Common myeloid progenitor, CD34-positive (primary cell): ENCODE measurements at regions of chr12 and their contacts with region 1.

Region 1: DNA sequence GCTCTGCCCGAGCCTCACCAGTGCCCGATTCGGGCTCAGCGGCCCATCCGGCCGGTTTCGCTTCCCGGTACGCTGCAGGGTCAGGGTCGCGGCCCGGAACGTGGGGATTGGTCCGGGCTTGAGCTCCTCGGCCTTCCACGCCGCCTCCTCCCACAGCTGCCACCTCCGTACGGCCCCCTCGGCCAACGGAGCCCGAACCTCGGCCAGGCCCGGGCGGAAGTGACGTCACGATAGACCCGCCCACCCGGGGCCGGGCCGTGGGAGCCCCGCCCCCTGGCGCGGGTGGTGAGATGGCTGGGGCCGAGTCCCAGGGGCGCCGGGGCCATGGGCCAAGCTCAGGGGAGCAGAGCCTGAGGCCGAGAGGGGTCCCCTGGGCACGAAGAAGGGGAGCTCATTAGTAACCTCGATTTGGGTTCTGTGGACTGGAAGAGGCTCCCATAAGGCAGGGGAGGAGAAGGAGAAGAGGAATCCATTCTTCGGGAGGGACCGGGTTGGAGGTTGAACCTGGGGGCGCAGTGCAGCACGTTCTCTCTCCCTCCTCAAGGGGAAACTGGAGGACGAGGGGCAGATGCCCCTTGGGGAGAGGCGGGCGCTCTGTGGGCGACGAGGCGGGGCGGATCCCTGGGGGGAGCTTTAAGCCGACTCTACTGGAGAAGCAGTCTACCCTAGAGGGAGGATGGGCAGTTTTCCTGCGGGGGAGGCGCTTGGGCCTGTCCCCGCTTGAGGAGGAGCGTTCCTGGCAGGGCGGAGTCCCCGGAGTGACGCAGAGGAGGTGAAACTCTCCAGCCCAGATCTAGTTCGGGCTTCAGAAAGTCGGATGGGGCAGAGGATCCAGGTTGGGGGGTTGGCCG is at the start of gene MLF2:
- DNase-seq: peak; percentile 96 to 99 (median 98)
- H3K4me3 ChIP-seq: peak within 1 kb of the TSS; percentile 80 to 93 (median 86)
- H3K27ac ChIP-seq: peak within 1 kb of the TSS; percentile 92 to 97
- H3K4me1 ChIP-seq: peaks cover 7 to 25% (median 24%) of the 10 kb centered on the region in 4 experiments
- H3K27me3 ChIP-seq: no peaks in the 10 kb centered on the region

Region 2: GRCh38 chr12:6407236-6407954 is 345.8 kb before region 1 on chr12:
- CTCF ChIA-PET with region 1: no interaction called
- POLR2A ChIA-PET with region 1: no interaction called
- DNase-seq: no peak
- H3K4me3 ChIP-seq: no peak overlapping the region
- H3K27ac ChIP-seq: no peak overlapping the region
- H3K4me1 ChIP-seq: no peaks in the 10 kb centered on the region
- H3K27me3 ChIP-seq: no peaks in the 10 kb centered on the region

Region 3: DNA sequence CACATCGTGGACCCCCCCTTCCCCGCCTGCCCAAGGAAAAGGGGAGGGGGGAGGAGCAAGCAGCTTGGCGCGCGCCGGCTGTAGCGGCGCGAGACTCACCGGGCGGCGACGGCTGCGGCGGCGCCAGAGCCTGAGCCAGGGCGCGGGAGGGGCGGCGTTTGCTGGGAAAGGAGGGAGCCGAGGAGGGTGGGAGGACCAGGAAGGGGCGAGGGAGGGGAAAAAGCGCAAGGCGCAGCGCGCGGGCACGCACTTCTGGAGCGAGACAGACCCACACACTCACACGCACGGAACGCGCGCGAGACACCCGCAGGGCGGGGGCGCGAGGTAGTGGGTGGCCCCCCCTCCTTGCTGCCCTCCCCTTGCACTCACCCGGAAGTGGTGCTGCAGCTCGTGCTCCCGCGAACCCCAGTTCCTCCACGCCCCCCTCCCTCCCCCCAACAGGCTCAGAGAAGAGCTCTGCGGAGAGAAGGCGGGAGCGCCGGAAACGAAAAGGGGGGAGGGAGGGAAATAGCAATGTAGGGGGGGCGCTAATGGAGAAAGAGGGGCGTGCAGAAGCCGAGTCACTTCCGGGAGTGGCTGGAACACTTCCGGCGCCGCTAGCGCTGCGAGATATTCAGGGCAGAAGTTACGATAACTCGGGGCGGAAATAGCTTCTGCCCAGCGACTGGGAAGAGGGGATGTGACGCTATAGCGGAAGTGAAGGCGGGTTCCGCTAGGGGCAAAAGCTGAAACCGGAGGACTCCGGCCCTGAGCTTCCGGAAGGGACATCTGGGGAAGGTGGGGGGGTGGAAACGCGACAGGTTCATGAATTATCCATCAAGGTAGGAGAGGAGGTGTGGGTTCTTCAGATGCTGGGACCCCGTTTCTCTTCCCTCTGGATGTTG is 63.9 kb before region 1 on chr12 and contains the start of gene ZNF384:
- CTCF ChIA-PET with region 1: no interaction called
- POLR2A ChIA-PET with region 1: interaction called, 10 read pairs
- DNase-seq: peak; percentile 98 to 99 (median 98)
- H3K4me3 ChIP-seq: peak within 1 kb of the TSS; percentile 58 to 96 (median 87)
- H3K27ac ChIP-seq: peak within 1 kb of the TSS; percentile 85 to 95
- H3K4me1 ChIP-seq: peaks cover 12 to 44% (median 38%) of the 10 kb centered on the region in 4 experiments
- H3K27me3 ChIP-seq: no peaks in the 10 kb centered on the region

Region 4: DNA sequence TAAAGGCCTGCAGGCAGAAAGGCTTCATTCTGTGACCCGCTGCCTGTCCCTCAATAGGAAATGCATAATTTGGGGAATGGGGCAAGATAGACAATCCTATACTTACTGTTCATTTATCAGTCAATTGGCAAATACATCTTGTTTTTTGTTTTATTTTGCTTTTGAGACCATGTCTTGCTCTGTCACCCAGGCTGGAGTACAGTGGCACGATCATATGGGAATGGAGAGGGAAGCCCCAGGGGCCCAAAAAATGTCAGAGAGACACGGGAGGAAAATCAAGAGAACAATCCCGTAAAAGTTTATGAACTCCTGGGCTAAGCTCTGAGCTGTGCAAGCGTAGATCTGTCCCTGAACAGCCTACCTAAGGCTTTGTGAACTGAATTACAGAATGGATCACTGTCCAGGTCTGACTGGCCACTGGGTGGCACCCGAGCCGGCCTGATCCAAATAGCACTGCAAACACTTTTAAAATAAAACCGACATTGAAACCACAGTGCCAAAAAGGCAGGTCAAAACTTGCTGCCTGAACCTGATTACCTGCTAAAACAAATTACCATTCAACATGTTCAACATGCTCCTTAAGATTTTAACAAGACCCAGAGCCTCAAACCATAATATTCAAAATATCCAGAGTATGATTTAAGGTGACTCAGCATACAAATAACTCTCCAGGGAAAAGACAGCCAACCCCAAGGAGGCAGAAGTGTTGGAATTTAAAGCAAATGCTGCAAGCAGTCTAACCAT is 17.5 kb before region 1 on chr12:
- CTCF ChIA-PET with region 1: interaction called, 28 read pairs
- POLR2A ChIA-PET with region 1: no interaction called
- DNase-seq: peak; percentile 59 to 74 (median 72)
- H3K4me3 ChIP-seq: no peak overlapping the region
- H3K27ac ChIP-seq: peak overlapping the region in 1 of 2 experiments; percentile 43
- H3K4me1 ChIP-seq: peaks cover 0 to 5% (median 2%) of the 10 kb centered on the region in 4 experiments
- H3K27me3 ChIP-seq: no peaks in the 10 kb centered on the region

Region 5: GRCh38 chr12:6778574-6779550 is 25.7 kb after region 1 on chr12:
- CTCF ChIA-PET with region 1: interaction called, 237 read pairs
- POLR2A ChIA-PET with region 1: interaction called, 4 read pairs
- DNase-seq: peak; percentile 86 to 93 (median 90)
- H3K4me3 ChIP-seq: peak overlapping the region; percentile 5 to 70 (median 62)
- H3K27ac ChIP-seq: no peak overlapping the region
- H3K4me1 ChIP-seq: peaks cover 0 to 28% (median 19%) of the 10 kb centered on the region in 4 experiments
- H3K27me3 ChIP-seq: peaks cover 0 to 13% (median 0%) of the 10 kb centered on the region in 5 experiments

Region 6: GRCh38 chr12:6825398-6826124 is 72.4 kb after region 1 on chr12:
- CTCF ChIA-PET with region 1: interaction called, 82 read pairs
- POLR2A ChIA-PET with region 1: interaction called, 7 read pairs
- DNase-seq: peak; percentile 66 to 80 (median 73)
- H3K4me3 ChIP-seq: peak overlapping the region in 1 of 7 experiments; percentile 32
- H3K27ac ChIP-seq: no peak overlapping the region
- H3K4me1 ChIP-seq: peaks cover 0 to 44% (median 39%) of the 10 kb centered on the region in 4 experiments
- H3K27me3 ChIP-seq: peaks cover 0 to 7% (median 0%) of the 10 kb centered on the region in 5 experiments